K562 (cell line): ENCODE measurements at regions of chr5 and their contacts with region 1.

Region 1: DNA sequence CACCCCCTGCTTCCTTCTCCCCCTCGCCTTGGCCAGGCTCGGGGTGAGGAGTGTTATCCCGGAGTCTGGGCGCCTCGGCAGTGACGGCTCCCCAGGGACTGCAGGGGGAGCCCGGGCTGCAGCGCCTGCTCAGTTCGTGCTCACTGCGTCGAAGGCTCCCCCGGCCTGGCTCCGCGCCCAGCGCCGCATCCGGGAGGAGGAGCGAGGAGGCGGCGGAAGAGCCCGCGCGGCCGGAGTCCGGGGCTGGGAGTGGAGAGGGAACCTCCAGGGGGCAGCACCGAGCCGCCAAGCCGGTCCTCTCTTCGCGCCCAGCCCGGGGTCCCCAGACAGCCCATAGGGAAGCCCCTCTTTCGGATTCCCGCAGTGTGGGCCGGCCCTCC is 1.3 kb upstream of the EGR1 start:
- DNase-seq: peak; percentile 91 to 97 (median 94)
- ATAC-seq: peak; percentile 63
- H3K4me3 ChIP-seq: peak overlapping the region; percentile 90
- H3K27ac ChIP-seq: peak overlapping the region; percentile 91
- H3K4me1 ChIP-seq: peaks cover 28 to 60% of the 10 kb centered on the region in 2 experiments
- H3K27me3 ChIP-seq: no peaks in the 10 kb centered on the region
- CTCF ChIP-seq: peak; percentile 77 to 93 (median 85)
- EP300 ChIP-seq: no peak
- POLR2A ChIP-seq: peak; percentile 70; the same call in 1 of the 2 replicates
- RAD21 ChIP-seq: peak; percentile 79 to 91

Region 2: GRCh38 chr5:138352071-138352721 is 111.8 kb before region 1 on chr5 and contains the start of gene KDM3B:
- CTCF ChIA-PET with region 1: no interaction called
- POLR2A ChIA-PET with region 1: interaction called, 13 read pairs
- in situ Hi-C with region 1: no loop called
- intact Hi-C with region 1: no loop called
- DNase-seq: peak; percentile 94 to 97 (median 95)
- ATAC-seq: peak; percentile 76
- H3K4me3 ChIP-seq: peak within 1 kb of the TSS; percentile 96
- H3K27ac ChIP-seq: peak within 1 kb of the TSS; percentile 93
- H3K4me1 ChIP-seq: peaks cover 6 to 15% of the 10 kb centered on the region in 2 experiments; a peak in 4 of 5 replicates
- H3K27me3 ChIP-seq: no peaks in the 10 kb centered on the region
- CTCF ChIP-seq: peak; percentile 99 to 100 (median 99)
- EP300 ChIP-seq: peak; percentile 55; the same call in 1 of the 2 replicates
- POLR2A ChIP-seq: no peak
- RAD21 ChIP-seq: peak; percentile 40 to 47; a peak in 3 of 4 replicates
- polyA plus RNA-seq, gene KDM3B: 13.8 to 15.0 TPM

Region 3: GRCh38 chr5:138482638-138483037 is 18.6 kb after region 1 on chr5:
- CTCF ChIA-PET with region 1: no interaction called
- POLR2A ChIA-PET with region 1: interaction called, 14 read pairs
- in situ Hi-C with region 1: no loop called
- intact Hi-C with region 1: no loop called
- DNase-seq: no peak
- ATAC-seq: peak; percentile 42
- H3K4me3 ChIP-seq: no peak overlapping the region
- H3K27ac ChIP-seq: no peak overlapping the region
- H3K4me1 ChIP-seq: peaks cover 4 to 5% of the 10 kb centered on the region in 2 experiments; a peak in 4 of 5 replicates
- H3K27me3 ChIP-seq: no peaks in the 10 kb centered on the region
- CTCF ChIP-seq: no peak
- EP300 ChIP-seq: no peak
- POLR2A ChIP-seq: no peak
- RAD21 ChIP-seq: no peak

Region 4: DNA sequence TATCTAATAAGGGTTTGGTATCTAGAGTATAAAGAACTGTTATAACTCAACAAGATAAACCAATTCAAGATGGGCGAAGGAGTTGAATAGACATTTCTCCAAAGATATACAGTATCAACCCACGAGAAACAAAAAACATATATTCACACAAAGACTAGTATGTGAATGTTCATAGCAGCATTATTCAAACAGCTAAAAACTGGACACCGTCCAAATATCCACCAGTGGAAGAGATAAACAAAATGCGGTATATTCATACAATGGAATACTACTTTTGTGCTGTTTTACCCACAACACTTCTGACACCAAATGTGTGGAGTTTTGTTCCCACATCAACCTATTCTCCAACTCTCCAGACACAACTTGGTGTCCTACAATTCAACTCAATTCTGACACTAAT is 34.4 kb after region 1 on chr5:
- CTCF ChIA-PET with region 1: interaction called, 57 read pairs
- POLR2A ChIA-PET with region 1: interaction called, 46 read pairs
- in situ Hi-C with region 1: loop called (anchors 5 kb)
- intact Hi-C with region 1: loop called (anchors 1 kb)
- DNase-seq: no peak
- ATAC-seq: no peak
- H3K4me3 ChIP-seq: no peak overlapping the region
- H3K27ac ChIP-seq: no peak overlapping the region
- H3K4me1 ChIP-seq: peaks cover 5 to 7% of the 10 kb centered on the region in 2 experiments; a peak in 4 of 5 replicates
- H3K27me3 ChIP-seq: no peaks in the 10 kb centered on the region
- CTCF ChIP-seq: no peak
- EP300 ChIP-seq: no peak
- POLR2A ChIP-seq: no peak
- RAD21 ChIP-seq: no peak

Region 5: DNA sequence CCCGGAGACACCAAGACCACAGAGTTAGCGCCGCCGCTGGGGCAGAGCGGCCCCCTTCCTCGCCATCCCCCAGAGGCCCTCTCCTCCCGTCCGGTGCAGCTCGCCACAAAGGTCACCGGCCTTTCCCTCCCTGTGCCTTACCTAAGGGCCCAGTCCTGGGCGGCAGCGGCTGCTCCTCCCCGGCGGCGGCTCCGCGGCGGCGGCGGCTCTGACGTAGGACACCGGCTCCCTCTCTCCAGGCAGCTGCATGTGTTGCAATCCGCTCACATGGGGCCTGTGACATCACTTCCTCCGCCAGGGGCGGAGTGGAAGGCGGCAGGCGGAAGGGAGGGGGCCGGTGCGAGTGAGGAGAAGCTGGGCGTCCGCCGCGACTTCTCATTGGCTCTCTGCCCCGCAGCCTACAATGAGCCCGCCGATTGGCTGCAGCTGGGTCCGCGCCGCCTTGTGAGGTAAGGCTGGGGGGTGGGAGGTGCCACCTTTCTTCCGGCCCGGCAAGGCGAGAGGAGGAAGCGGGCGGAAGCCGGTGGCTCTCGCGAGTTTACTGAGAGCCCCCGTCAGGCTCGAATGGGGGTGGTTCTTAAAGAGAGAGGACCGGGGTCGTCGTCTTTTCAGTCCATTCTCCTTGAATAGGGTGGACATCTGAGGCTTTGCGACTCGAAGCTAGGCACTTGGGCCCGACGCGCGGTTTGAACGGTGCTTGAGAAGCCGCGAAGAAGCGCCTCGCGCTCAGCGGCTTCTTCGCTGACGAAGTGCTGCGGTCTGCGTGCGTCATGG is 79.1 kb after region 1 on chr5 and contains the start of gene ETF1:
- CTCF ChIA-PET with region 1: interaction called, 4 read pairs
- POLR2A ChIA-PET with region 1: interaction called, 10 read pairs
- in situ Hi-C with region 1: no loop called
- intact Hi-C with region 1: loop called (anchors 1 kb)
- DNase-seq: peak; percentile 98 to 100 (median 99)
- ATAC-seq: peak; percentile 88
- H3K4me3 ChIP-seq: peak within 1 kb of the TSS; percentile 97
- H3K27ac ChIP-seq: peak within 1 kb of the TSS; percentile 97
- H3K4me1 ChIP-seq: peaks cover 7 to 36% of the 10 kb centered on the region in 2 experiments
- H3K27me3 ChIP-seq: no peaks in the 10 kb centered on the region
- CTCF ChIP-seq: 0 out of 6 replicates have a peak, but pooled peaks of 1 of the 3 experiments have one; percentile 8
- EP300 ChIP-seq: 0 out of 2 replicates have a peak, but pooled peaks have one; percentile 13
- POLR2A ChIP-seq: peak; percentile 94
- RAD21 ChIP-seq: no peak
- polyA plus RNA-seq, gene ETF1: 53.7 to 57.3 TPM